Left lung (tissue), 14 donors: ENCODE measurements at regions of chr11 and their contacts with region 1.

Region 1: DNA sequence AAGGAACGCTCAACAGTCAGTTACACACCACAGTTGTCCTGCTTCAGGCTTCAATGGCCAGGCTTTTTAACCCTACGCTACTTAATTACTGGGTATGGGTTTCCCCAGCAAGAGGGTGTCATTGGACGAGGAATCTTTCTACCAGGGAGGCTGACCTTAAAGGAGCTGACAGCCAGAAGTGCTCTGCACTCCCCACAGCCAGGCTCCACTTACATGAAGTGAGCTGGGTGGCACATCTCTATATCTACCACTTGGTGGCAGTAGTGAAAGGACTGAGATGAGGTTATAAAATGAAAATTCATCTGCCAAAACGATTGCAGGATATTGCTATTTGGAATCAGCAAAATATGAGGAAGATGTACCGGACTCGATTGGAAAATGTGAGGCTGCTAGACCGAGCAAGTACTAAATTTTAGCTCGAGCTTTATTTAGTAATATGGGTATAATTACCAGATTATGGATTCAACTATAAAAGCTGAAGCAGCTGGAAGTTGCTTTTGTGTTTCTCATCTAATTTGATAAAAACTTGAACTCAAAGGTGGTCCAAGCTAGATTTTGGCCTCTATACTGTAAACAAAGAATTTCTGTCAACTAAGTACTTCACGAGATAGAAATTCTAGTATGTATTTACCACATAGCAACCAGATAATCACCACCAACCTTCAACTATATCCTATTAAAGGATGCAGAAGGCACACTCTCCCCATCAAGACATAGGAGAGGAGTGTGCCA is 53.9 kb upstream of the CEP126 start:
- DNase-seq: peak in 2 of 4 donors; percentile 61 to 75
- ATAC-seq: peak; percentile 97
- H3K4me3 ChIP-seq: no peak overlapping the region
- H3K27ac ChIP-seq: no peak overlapping the region
- H3K4me1 ChIP-seq: peaks cover 0 to 5% of the 10 kb centered on the region in 2 donors
- H3K27me3 ChIP-seq: no peaks in the 10 kb centered on the region
- CTCF ChIP-seq: peak; percentile 60 to 66

Region 2: GRCh38 chr11:101759771-101760450 is 101.0 kb before region 1 on chr11:
- intact Hi-C with region 1: no loop called
- DNase-seq: no peak
- ATAC-seq: no peak
- H3K4me3 ChIP-seq: no peak overlapping the region
- H3K27ac ChIP-seq: no peak overlapping the region
- H3K4me1 ChIP-seq: no peaks in the 10 kb centered on the region
- H3K27me3 ChIP-seq: no peaks in the 10 kb centered on the region
- CTCF ChIP-seq: no peak

Region 3: DNA sequence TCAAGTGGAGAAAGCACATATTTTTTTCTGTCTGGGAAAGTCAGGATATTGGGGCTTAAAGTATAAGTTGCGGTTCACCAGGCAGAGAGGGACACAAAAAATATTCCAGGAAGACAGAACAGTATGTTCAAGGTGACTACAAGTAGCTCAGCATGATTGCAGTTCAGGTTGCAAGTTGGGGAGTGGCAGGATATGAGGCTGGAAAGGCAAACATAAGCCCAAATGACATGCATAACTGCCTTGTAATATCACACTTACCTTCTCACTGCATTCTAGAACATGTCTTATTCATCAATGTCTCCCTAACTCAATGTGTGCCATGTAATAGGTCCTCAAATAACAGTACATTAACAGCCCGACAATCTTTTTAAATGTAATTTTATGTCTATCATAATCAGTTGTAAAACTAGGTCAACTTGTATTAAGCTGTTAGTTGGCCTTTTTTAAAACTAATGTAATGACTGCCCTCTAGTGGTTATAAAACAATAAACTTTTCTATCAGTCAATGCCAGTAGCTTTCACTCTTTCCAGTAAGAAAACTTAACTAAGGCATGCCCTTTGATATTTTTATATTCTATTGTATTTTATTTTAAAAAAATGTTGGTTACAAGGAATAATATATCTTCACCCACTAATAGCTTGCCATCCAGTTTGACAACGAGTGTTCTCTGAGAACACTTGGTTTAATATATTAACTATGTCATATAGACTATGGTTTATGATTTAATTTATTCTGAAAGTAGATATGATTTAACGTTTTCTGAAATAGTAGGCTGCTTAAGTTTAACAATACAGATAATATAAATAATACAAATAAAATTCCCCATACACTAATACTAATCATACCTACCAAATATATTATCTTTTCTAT is 146.9 kb after region 1 on chr11:
- intact Hi-C with region 1: loop called in 1 of 2 experiments (anchors 5 kb)
- DNase-seq: peak in 3 of 4 donors; percentile 50 to 54 (median 53)
- ATAC-seq: peak; percentile 86
- H3K4me3 ChIP-seq: no peak overlapping the region
- H3K27ac ChIP-seq: peak overlapping the region; percentile 45 to 63
- H3K4me1 ChIP-seq: peaks cover 0 to 6% of the 10 kb centered on the region in 2 donors
- H3K27me3 ChIP-seq: no peaks in the 10 kb centered on the region
- CTCF ChIP-seq: peak; percentile 51 to 55

Region 4: GRCh38 chr11:102204174-102204573 is 343.3 kb after region 1 on chr11:
- intact Hi-C with region 1: no loop called
- DNase-seq: no peak
- ATAC-seq: no peak
- H3K4me3 ChIP-seq: no peak overlapping the region
- H3K27ac ChIP-seq: no peak overlapping the region
- H3K4me1 ChIP-seq: no peaks in the 10 kb centered on the region
- H3K27me3 ChIP-seq: no peaks in the 10 kb centered on the region
- CTCF ChIP-seq: no peak